Mammary epithelial cell (primary cell): ENCODE measurements at regions of chr12 and their contacts with region 1.

Region 1: GRCh38 chr12:109612975-109613502 is 39.4 kb downstream of the MVK start:
- DNase-seq: peak; percentile 29
- H3K4me3 ChIP-seq: no peak overlapping the region
- H3K27ac ChIP-seq: no peak overlapping the region
- H3K4me1 ChIP-seq: peaks cover 2% of the 10 kb centered on the region
- H3K27me3 ChIP-seq: no peaks in the 10 kb centered on the region
- CTCF ChIP-seq: peak; percentile 39 to 41

Region 2: GRCh38 chr12:109529691-109530640 is 83.1 kb before region 1 on chr12:
- CTCF ChIA-PET with region 1: no interaction called
- dilution Hi-C with region 1: loop called (anchors 5 kb)
- in situ Hi-C with region 1: no loop called
- intact Hi-C with region 1: no loop called
- DNase-seq: no peak
- H3K4me3 ChIP-seq: no peak overlapping the region
- H3K27ac ChIP-seq: no peak overlapping the region
- H3K4me1 ChIP-seq: no peaks in the 10 kb centered on the region
- H3K27me3 ChIP-seq: no peaks in the 10 kb centered on the region
- CTCF ChIP-seq: no peak

Region 3: GRCh38 chr12:109706747-109707469 is 93.9 kb after region 1 on chr12:
- CTCF ChIA-PET with region 1: no interaction called
- dilution Hi-C with region 1: loop called (anchors 5 kb)
- in situ Hi-C with region 1: no loop called
- intact Hi-C with region 1: no loop called
- DNase-seq: no peak
- H3K4me3 ChIP-seq: no peak overlapping the region
- H3K27ac ChIP-seq: no peak overlapping the region
- H3K4me1 ChIP-seq: no peaks in the 10 kb centered on the region
- H3K27me3 ChIP-seq: peaks cover 1% of the 10 kb centered on the region
- CTCF ChIP-seq: no peak